Right ventricle myocardium superior (tissue), 1 donor: ENCODE measurements at regions of chr3 and their contacts with region 1.

Region 1: GRCh38 chr3:123194552-123194951 is 7.2 kb upstream of the SEC22A start:
- DNase-seq: no peak
- ATAC-seq: peak; percentile 36

Region 2: GRCh38 chr3:122245513-122246174 is 948.9 kb before region 1 on chr3:
- intact Hi-C with region 1: no loop called
- DNase-seq: no peak
- ATAC-seq: no peak

Region 3: GRCh38 chr3:123244128-123244527 is 49.6 kb after region 1 on chr3:
- intact Hi-C with region 1: loop called (anchors 5 kb)
- DNase-seq: no peak
- ATAC-seq: no peak